Activated CD4-positive, alpha-beta T cell treated with anti-CD3 and anti-CD28 coated beads for 36 hours (primary cell): ENCODE measurements at regions of chr11 and their contacts with region 1.

Region 1: DNA sequence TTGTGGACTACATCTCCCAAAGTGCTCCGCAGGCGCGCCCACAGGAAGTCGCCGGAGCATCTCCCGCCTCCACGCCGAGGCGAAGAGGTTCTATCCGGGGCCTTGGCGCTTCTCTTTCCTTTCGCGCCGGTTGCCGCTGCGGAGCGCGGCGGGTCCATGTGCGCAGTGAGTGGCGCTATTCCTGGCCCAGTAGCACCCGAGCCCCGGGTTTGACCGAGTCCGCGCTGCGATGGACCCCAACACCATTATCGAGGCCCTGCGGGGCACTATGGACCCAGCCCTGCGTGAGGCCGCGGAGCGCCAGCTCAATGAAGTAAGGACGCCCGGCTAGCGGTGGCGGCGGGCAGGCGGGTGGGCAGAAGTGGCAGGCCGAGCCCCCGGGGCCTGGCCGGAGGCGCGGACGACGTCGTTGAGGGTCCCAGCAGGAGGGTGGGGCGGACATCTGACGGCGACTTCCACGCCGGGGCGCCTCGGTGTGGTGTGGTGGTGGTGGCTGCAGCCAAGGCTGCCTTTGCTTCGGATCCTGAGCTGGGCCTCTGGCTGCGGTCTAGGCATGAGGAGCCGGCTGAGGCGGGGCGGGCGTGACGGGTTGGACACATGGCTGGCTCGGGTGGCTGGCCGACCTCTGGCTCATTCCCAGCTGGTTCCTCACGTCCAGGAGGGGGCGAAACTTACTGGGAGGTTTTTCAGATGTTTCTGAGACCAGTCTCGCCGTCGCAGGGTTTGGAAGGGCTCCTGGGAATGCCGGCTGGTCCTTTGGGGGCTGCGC is at the start of gene IPO7:
- DNase-seq: peak; percentile 96
- ATAC-seq: peak; percentile 98
- H3K4me3 Mint-ChIP-seq: peak within 1 kb of the TSS; percentile 96
- H3K27ac Mint-ChIP-seq: peak within 1 kb of the TSS; percentile 96
- H3K4me1 Mint-ChIP-seq: peaks cover 26% of the 10 kb centered on the region
- H3K27me3 Mint-ChIP-seq: no peaks in the 10 kb centered on the region
- total RNA-seq, gene IPO7: 155 to 181 TPM

Region 2: GRCh38 chr11:7501894-7502293 is 1882.8 kb before region 1 on chr11:
- CTCF ChIA-PET with region 1: no interaction called
- POLR2A ChIA-PET with region 1: no interaction called
- intact Hi-C with region 1: no loop called
- DNase-seq: no peak
- ATAC-seq: no peak
- H3K4me3 Mint-ChIP-seq: no peak overlapping the region
- H3K27ac Mint-ChIP-seq: no peak overlapping the region
- H3K4me1 Mint-ChIP-seq: no peaks in the 10 kb centered on the region
- H3K27me3 Mint-ChIP-seq: no peaks in the 10 kb centered on the region

Region 3: DNA sequence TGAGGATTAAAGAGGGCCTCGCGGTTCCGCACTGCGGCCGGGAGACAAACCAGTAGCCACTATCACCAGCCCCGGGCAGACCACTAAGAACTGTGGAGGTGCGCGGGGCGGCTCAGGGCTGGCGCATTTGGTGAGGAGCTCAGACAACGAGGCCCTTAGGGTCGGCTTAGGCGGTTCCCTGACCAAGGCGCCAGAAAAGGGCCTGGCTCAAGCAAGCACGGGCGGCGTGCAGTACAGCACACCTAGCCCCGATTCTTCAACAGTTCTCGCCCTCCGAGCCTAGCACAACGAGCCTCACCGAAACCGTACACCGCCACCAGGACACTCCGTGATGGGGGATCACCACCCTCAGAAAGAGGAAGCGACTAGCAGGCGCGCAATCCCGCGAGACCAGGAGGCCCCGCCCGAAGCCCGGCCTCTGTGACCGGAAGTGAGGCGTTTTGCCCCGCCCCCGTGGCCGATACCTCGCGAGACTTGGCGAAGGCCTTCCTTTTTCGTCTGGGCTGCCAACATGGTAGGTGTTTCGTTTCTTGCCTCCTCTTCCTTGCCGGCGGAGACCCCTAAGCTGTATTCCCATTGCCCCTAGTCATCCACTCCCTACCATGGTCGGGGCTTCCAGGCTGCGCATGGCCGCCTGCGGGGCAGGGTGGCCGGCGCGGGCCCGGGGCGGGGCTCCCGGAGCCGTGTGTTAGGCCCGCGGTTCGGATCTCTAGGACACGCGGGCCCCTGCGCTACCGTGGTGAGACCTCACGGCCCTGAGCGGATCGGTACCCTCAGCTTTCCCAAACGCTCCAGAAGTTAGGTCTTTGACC is 702.2 kb before region 1 on chr11 and contains the starts of genes RPL27A and TRIM66:
- CTCF ChIA-PET with region 1: no interaction called
- POLR2A ChIA-PET with region 1: no interaction called
- intact Hi-C with region 1: loop called in 1 of 2 experiments (anchors 1 kb)
- DNase-seq: peak; percentile 99
- ATAC-seq: peak; percentile 96
- H3K4me3 Mint-ChIP-seq: peak within 1 kb of the TSS; percentile 97
- H3K27ac Mint-ChIP-seq: peak within 1 kb of the TSS; percentile 98
- H3K4me1 Mint-ChIP-seq: peaks cover 46% of the 10 kb centered on the region
- H3K27me3 Mint-ChIP-seq: no peaks in the 10 kb centered on the region
- total RNA-seq, gene RPL27A: 688 to 1,021 TPM
- total RNA-seq, gene TRIM66: 18.3 to 19.5 TPM

Region 4: DNA sequence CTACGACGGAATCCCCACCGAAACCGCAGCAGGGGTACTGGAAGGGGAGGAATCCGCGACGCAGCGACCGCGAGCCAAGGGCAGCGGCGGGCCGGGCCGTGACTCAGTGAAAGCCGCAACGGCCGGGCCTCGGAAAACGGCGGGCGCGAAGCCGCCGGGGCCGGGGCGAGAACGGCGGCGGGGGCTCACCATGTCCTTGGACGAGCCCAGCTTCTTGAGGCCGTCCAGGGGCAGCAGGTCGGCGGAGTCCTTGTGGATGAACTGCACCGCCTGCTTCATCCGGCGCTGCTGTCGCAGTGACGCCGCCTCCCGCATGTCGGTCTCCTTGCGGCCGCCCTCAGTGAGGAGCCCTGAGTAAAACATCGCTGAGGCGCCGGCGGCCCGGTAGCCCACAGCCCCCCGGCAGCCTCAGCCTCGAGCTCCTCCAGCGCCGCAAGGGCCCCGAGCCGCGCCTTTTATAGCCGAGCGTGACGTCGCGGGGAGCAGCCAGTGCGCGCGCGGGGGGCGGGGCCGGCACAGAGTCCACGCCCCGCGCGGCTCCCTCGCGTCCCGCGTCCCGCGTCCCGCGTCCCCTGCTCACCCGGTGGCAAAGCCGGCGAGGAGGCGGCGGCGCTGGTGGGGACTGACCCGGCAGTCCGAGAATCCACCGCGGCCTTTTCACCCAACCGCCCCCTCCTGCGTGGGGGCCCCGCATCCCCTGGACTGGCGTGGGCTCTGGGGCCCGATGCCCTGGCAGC is 381.0 kb before region 1 on chr11 and contains the start of gene NRIP3:
- CTCF ChIA-PET with region 1: no interaction called
- POLR2A ChIA-PET with region 1: no interaction called
- intact Hi-C with region 1: loop called in 1 of 2 experiments (anchors 5 kb)
- DNase-seq: peak; percentile 82
- ATAC-seq: peak; percentile 41
- H3K4me3 Mint-ChIP-seq: peak within 1 kb of the TSS; percentile 65
- H3K27ac Mint-ChIP-seq: peak within 1 kb of the TSS; percentile 38
- H3K4me1 Mint-ChIP-seq: peaks cover 27% of the 10 kb centered on the region
- H3K27me3 Mint-ChIP-seq: peaks cover 34% of the 10 kb centered on the region
- total RNA-seq, gene NRIP3: 2.1 to 2.2 TPM

Region 5: DNA sequence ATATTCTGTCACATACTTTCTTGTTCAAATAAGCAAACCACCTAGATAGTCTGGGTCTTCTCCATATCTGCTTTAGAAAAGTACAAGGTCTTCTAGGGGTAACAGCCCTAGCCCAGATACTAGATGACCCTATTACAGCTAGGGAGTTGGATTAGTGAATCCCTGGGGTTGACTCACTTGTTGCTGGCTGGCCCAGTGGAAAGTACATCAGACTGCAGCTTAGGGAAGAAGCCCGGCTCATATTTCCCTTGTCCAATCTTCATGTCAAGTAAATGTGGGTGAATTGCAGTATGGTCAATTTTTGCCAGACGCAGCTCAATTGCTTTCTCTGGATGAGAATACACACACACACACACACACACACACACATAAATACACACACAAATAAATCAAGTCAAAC is 214.3 kb before region 1 on chr11:
- CTCF ChIA-PET with region 1: no interaction called
- POLR2A ChIA-PET with region 1: no interaction called
- intact Hi-C with region 1: loop called in 1 of 2 experiments (anchors 5 kb)
- DNase-seq: no peak
- ATAC-seq: no peak
- H3K4me3 Mint-ChIP-seq: no peak overlapping the region
- H3K27ac Mint-ChIP-seq: no peak overlapping the region
- H3K4me1 Mint-ChIP-seq: peaks cover 13% of the 10 kb centered on the region
- H3K27me3 Mint-ChIP-seq: no peaks in the 10 kb centered on the region

Region 6: DNA sequence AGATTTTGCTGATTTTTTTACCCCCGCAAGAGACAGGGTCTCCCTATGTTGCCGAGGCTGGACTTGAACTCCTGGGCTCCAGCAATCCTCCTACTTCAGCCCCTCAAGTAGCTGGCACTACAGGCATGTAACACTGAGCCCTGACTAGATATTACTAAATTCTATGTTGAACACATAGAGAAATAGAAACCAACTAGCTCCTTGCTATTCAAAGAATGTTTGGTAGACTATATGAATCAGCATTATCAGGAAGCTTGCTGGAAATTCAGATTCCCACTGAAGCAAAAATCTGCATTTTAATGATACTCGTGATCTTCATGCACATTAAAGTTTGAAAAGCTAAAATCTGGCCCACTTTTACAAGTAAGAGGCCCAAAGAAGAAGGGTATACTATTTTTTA is 82.3 kb before region 1 on chr11:
- CTCF ChIA-PET with region 1: no interaction called
- POLR2A ChIA-PET with region 1: interaction called, 10 read pairs
- intact Hi-C with region 1: no loop called
- DNase-seq: no peak
- ATAC-seq: no peak
- H3K4me3 Mint-ChIP-seq: no peak overlapping the region
- H3K27ac Mint-ChIP-seq: no peak overlapping the region
- H3K4me1 Mint-ChIP-seq: peaks cover 4% of the 10 kb centered on the region
- H3K27me3 Mint-ChIP-seq: no peaks in the 10 kb centered on the region

Region 7: DNA sequence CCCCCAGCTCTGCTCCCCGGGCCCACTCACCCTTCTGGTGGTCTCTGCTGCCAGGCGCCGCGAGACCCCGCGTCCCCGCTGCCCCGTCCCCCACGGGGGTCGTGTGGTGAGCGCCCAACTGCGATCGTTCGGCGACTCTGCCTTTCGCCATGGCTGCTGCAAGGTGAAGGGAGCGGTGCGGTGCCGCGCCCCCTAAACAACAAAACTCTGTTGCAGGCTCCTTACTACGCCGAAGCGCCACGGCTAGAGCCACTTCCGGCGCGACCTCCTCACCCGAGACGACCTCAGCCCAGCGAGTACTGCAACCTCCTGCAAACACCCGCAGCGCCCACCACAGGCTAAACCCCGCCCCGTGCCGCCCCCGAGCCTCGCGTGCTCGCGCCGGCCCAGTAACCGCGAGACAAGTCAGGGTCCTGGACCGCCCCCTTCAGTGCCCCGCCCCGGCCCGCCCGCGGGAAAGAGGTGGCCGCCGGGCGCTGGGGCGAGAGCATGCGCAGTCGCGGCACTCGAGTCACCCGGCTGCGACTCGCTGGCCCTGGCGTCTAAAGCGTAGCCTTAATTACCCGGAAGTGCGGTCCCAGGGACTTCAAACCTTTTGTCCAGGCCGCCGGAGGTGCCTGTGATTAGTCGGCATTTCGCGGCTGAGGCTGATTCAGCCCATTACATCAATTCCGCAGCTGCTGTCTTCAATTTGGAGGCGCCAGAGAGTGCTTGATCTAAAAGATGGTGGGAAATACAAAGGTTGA is 70.3 kb before region 1 on chr11 and contains the start of gene TMEM41B:
- CTCF ChIA-PET with region 1: interaction called, 6 read pairs
- POLR2A ChIA-PET with region 1: interaction called, 5 read pairs
- intact Hi-C with region 1: loop called (anchors 1 kb)
- DNase-seq: peak; percentile 100
- ATAC-seq: peak; percentile 95
- H3K4me3 Mint-ChIP-seq: peak within 1 kb of the TSS; percentile 99
- H3K27ac Mint-ChIP-seq: peak within 1 kb of the TSS; percentile 99
- H3K4me1 Mint-ChIP-seq: peaks cover 36% of the 10 kb centered on the region
- H3K27me3 Mint-ChIP-seq: peaks cover 11% of the 10 kb centered on the region
- total RNA-seq, gene TMEM41B: 20.2 to 29.3 TPM

Region 8: GRCh38 chr11:9363954-9364912 is 20.5 kb before region 1 on chr11:
- CTCF ChIA-PET with region 1: interaction called, 3 read pairs
- POLR2A ChIA-PET with region 1: interaction called, 17 read pairs
- intact Hi-C with region 1: loop called (anchors 1 kb)
- DNase-seq: peak; percentile 92
- ATAC-seq: peak; percentile 88
- H3K4me3 Mint-ChIP-seq: peak overlapping the region; percentile 62
- H3K27ac Mint-ChIP-seq: peak overlapping the region; percentile 88
- H3K4me1 Mint-ChIP-seq: peaks cover 30% of the 10 kb centered on the region
- H3K27me3 Mint-ChIP-seq: no peaks in the 10 kb centered on the region